Activated B cell treated with CpG ODN at 0.5 μM for 24 hours (primary cell): ENCODE measurements at regions of chr1 and their contacts with region 1.

Region 1: GRCh38 chr1:1906185-1907097 is 8.6 kb upstream of the CALML6 start:
- DNase-seq: peak; percentile 58
- ATAC-seq: peak; percentile 29
- H3K4me3 Mint-ChIP-seq: peak overlapping the region; percentile 73
- H3K27ac Mint-ChIP-seq: peak overlapping the region; percentile 70
- H3K4me1 Mint-ChIP-seq: peaks cover 26% of the 10 kb centered on the region
- H3K27me3 Mint-ChIP-seq: no peaks in the 10 kb centered on the region
- CTCF ChIP-seq: no peak

Region 2: DNA sequence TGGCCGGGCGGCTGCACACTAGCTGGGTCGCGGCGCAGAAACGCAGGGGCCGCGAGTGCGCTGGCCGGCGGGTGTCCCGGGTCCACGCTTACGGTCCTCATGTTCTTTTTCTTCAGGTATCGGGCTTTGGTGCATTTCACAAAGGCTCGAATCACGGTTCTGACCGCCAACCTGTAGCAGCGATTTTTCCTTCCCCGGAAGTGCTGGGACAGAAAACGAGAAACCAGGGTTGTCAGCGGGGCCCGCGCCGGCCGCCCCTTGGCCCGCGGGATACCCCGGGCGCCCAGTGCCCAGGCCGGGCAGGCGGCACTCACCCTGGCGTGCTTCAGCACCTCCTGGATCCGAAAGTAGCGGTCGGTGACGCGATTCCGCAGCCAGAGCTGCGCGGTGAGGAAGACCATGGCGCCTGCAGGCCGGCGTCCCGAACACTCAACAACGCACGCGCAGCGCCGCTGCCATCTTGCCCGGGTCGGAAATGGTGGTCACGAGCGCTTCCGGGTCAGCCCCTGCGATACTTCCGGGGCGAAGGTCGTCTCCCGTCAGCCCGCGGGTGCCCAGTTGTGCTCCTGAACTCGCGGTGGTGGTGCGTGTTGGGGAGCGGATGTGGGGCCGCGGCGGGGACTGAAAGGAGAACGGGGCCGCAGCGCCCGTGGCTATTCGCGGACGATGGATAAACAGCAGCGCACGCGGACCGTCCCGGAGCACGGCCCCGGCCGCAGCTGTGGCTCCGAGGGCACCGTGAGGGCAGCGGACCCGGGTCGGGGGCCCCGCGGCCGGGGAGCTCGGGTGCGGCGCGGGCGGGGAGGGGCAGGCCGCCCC is 499.4 kb before region 1 on chr1 and contains the start of gene MRPL20:
- CTCF ChIA-PET with region 1: no interaction called
- POLR2A ChIA-PET with region 1: no interaction called
- intact Hi-C with region 1: loop called (anchors 10 kb)
- DNase-seq: peak; percentile 92
- ATAC-seq: peak; percentile 93
- H3K4me3 Mint-ChIP-seq: peak within 1 kb of the TSS; percentile 92
- H3K27ac Mint-ChIP-seq: peak within 1 kb of the TSS; percentile 89
- H3K4me1 Mint-ChIP-seq: peaks cover 38% of the 10 kb centered on the region
- H3K27me3 Mint-ChIP-seq: no peaks in the 10 kb centered on the region
- CTCF ChIP-seq: no peak
- total RNA-seq, gene MRPL20: 134 and 136 TPM in 2 replicates

Region 3: DNA sequence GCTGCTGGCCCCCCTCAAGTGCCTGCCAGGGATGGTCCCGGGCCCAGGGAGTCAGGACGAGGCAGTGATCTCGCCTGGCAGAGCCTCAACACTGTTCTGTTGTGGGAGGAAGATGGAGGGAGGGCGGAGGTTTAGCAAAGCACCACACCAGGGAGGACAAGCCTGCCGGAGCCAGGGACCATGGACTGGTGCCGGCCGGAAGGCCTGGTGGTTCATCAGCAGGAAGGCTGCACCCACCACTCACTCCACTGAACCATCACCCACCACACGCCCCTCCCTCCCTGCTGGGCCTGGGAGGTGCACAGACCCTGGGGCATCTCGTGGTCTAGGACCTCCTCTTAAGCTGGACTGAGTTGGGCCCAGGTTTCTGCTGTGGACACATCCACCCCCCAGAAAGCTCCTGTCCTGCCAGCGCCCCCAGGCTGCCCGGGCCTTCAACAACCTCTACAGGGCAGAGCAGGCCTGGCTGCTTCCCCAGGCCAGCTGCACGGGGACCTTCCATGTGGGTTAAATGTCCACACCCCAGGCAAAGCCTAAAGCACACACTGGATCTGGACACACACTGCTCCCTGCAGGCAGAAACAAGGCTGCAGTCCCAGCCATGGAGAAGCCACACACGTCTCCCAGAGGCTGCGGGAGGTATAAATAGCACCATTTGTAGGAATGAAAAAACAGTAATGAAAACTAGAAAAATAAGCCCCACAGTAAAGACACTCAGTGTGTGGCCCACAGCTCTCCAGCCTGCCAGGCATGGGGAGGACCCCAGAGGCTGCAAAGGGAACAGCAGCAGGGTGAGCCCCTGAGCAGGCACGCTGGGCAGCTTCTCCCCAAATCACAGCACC is 355.6 kb before region 1 on chr1:
- CTCF ChIA-PET with region 1: no interaction called
- POLR2A ChIA-PET with region 1: no interaction called
- intact Hi-C with region 1: no loop called
- DNase-seq: no peak
- ATAC-seq: no peak
- H3K4me3 Mint-ChIP-seq: no peak overlapping the region
- H3K27ac Mint-ChIP-seq: no peak overlapping the region
- H3K4me1 Mint-ChIP-seq: no peaks in the 10 kb centered on the region
- H3K27me3 Mint-ChIP-seq: no peaks in the 10 kb centered on the region
- CTCF ChIP-seq: no peak

Region 4: GRCh38 chr1:1630271-1630964 is 276.0 kb before region 1 on chr1:
- CTCF ChIA-PET with region 1: no interaction called
- POLR2A ChIA-PET with region 1: interaction called, 8 read pairs
- intact Hi-C with region 1: loop called (anchors 5 kb)
- DNase-seq: peak; percentile 90
- ATAC-seq: peak; percentile 80
- H3K4me3 Mint-ChIP-seq: peak overlapping the region; percentile 82
- H3K27ac Mint-ChIP-seq: peak overlapping the region; percentile 82
- H3K4me1 Mint-ChIP-seq: peaks cover 6% of the 10 kb centered on the region
- H3K27me3 Mint-ChIP-seq: peaks cover 4% of the 10 kb centered on the region
- CTCF ChIP-seq: no peak

Region 5: DNA sequence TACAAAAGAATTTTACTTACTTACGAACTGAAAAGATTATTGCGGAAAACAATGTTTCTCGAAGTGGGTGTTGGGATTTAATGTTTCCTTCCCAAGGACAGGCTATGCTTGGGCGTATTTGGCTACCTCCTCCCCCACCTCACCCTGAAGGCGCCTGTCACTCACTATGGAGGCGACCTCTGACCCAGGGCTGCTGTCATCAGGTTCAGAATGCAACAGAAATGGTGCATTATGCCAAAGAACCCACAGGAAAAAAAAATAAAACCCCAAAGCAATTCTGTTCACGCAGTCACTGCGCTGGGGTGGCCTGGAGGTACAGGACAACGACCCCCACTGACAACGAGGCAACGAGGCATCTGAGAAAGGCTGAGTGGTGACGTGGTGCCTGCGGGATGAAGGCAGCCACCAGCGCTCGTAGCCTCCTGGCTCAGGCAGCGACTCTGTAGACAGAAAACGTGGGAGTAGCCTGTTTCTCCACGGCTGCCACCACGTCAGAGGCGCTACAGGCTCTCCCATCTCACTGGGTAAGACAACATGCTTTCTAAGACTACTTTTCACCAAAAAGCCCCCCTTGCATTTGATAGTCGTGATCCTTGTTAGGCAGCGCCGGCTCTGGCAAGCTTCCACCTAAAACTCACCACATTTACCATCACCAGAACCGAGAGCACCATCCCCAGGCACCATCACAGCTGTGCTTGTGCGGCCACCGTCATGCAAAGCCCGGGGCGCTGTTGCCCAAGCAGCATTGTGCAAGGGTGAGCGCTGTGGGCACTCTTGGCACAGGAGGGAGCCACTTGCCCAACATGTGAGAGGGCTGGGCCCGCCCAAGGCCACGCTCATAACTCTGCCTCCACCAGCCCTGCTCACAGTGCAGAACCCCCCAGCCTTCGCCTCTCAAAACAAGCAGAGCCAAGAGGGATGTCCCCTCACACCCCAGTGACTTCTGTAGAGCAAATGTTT is 142.5 kb before region 1 on chr1:
- CTCF ChIA-PET with region 1: no interaction called
- POLR2A ChIA-PET with region 1: no interaction called
- intact Hi-C with region 1: loop called (anchors 1 kb)
- DNase-seq: no peak
- ATAC-seq: peak; percentile 61
- H3K4me3 Mint-ChIP-seq: no peak overlapping the region
- H3K27ac Mint-ChIP-seq: peak overlapping the region; percentile 26
- H3K4me1 Mint-ChIP-seq: peaks cover 8% of the 10 kb centered on the region
- H3K27me3 Mint-ChIP-seq: no peaks in the 10 kb centered on the region
- CTCF ChIP-seq: no peak

Region 6: DNA sequence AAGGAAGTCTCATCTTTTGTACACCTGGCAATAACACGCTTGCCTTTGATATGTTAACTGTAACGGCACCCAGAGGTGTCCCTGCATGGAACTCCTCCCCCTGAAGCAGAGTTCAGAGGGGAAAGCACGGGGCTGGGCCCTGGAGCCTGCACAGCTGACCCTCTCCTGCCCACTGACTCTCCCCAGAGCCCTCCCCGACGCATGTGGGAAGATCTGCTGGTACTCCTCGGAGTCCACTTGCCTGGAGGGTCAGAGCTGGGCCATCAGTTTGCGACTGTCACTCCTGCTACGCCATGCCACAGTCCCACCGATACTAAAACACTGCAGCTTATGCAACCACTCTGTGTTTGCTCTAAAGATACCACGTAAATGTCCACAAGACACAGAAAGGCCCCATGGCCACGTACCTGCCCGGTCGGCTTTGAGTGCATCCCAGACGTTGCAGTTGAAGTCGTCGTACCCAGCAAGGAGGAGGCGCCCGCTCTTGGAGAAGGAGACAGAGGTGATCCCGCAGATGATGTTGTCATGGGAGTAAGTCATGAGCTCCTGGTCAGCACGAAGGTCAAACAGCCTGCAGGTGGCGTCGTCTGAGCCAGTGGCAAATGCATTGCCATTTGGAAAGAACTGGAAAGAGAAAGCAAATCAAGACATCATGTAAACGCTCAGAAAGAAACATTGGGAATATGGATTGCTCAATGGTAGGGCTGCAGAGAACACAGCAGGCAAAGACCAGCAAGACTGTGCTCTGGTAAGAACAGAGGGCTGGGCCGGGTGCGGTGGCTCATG is 117.6 kb before region 1 on chr1:
- CTCF ChIA-PET with region 1: interaction called, 19 read pairs
- POLR2A ChIA-PET with region 1: interaction called, 5 read pairs
- intact Hi-C with region 1: no loop called
- DNase-seq: no peak
- ATAC-seq: no peak
- H3K4me3 Mint-ChIP-seq: no peak overlapping the region
- H3K27ac Mint-ChIP-seq: no peak overlapping the region
- H3K4me1 Mint-ChIP-seq: no peaks in the 10 kb centered on the region
- H3K27me3 Mint-ChIP-seq: no peaks in the 10 kb centered on the region
- CTCF ChIP-seq: no peak

Region 7: DNA sequence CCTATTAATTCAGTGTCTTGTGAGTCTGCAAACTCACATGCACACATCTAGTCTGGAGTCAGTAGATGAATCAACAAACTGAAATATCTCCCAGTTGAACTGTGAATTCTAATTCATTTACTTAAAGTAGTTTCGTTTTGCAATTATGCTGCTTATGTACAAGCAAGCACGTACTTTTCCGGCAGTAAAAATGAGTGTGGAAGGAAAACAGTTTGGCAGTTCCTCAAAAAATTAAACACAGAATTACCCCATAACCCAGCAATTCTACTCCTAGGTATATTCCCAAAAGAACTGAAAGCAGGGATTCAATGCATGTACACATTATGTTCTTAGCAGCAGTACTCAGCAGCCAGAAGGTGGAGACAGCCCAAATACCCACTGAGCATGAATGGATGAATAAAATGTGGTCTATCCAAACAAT is 64.9 kb before region 1 on chr1:
- CTCF ChIA-PET with region 1: no interaction called
- POLR2A ChIA-PET with region 1: no interaction called
- intact Hi-C with region 1: loop called (anchors 5 kb)
- DNase-seq: no peak
- ATAC-seq: no peak
- H3K4me3 Mint-ChIP-seq: peak overlapping the region; percentile 70
- H3K27ac Mint-ChIP-seq: peak overlapping the region; percentile 74
- H3K4me1 Mint-ChIP-seq: peaks cover 73% of the 10 kb centered on the region
- H3K27me3 Mint-ChIP-seq: no peaks in the 10 kb centered on the region
- CTCF ChIP-seq: no peak

Region 8: GRCh38 chr1:1890506-1891348 is 15.7 kb before region 1 on chr1 and contains the start of gene GNB1:
- CTCF ChIA-PET with region 1: interaction called, 13 read pairs
- POLR2A ChIA-PET with region 1: interaction called, 17 read pairs
- intact Hi-C with region 1: loop called (anchors 1 kb)
- DNase-seq: peak; percentile 96
- ATAC-seq: peak; percentile 59
- H3K4me3 Mint-ChIP-seq: peak within 1 kb of the TSS; percentile 86
- H3K27ac Mint-ChIP-seq: peak within 1 kb of the TSS; percentile 95
- H3K4me1 Mint-ChIP-seq: peaks cover 66% of the 10 kb centered on the region
- H3K27me3 Mint-ChIP-seq: no peaks in the 10 kb centered on the region
- CTCF ChIP-seq: no peak
- total RNA-seq, gene GNB1: 266 and 302 TPM in 2 replicates